Right ventricle myocardium superior (tissue), 1 donor: ENCODE measurements at regions of chr18 and their contacts with region 1.

Region 1: GRCh38 chr18:22169007-22169864 is at the start of gene GATA6:
- DNase-seq: peak; percentile 95
- ATAC-seq: peak; percentile 74
- total RNA-seq, gene GATA6: 56.0 TPM

Region 2: GRCh38 chr18:21914739-21915319 is 254.4 kb before region 1 on chr18:
- intact Hi-C with region 1: loop called (anchors 10 kb)
- DNase-seq: no peak
- ATAC-seq: peak; percentile 73

Region 3: DNA sequence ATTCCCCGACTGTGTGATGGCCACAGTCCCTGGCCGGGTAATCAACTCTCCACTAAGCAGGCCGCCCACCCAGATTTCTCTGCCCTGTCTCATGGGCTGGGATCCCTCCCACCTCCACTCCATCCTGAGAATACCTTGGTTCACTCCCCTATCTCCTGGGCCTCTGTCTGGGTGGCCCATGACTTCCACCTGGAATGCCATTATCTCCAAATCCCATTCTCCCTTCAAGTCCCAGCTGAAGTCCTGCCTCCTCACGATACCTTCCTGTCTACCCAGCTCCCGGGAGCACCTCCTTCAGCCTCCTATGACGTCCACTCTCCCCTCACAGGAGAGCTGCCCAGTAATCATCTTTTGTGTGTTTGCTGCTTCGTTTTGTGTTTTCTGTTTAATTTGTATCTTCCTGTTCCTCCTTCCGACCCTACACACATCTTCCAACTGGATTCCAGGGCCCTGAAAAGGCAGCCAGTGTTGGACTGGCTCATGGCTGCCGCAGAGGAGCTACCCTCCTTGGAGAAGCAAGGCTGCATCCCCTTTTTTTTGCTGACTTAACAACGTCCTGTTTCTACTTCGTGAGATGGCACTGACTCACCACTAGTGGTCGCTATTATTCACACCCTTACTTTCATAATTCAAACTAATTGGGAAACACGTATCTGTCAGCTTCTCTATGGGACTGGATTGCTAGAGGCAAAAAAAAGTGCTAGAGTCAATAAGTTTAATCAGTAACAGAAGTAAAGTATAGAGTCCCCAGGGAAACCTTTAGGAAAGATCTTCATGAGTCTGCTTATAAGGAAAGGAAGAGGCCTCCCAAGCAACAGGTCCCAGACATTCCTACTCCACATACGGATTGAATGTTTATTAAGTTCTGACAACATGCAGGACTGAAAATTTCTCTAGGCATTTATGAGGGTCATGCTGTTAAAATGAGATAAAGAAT is 171.8 kb before region 1 on chr18:
- intact Hi-C with region 1: loop called (anchors 5 kb)
- DNase-seq: no peak
- ATAC-seq: peak; percentile 86

Region 4: DNA sequence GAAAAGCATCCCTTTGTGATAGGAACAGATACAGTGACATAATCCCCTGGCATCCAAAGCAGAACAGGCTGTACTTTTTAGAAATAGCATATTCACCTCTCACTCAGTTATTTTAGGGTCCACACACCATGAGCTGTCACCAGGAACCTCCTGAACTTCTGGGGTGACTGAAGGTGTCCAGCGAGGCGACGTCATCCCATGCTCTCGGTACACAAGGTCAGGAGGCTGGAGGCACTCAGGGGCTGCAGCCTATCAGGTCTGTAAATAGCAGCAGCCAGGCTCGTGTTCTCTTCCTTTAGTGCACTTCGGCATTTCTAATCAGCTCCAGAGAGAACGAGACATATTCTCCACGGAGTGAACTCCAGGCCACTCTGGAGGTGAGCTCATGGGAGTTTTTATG is 98.5 kb after region 1 on chr18:
- intact Hi-C with region 1: loop called (anchors 5 kb)
- DNase-seq: peak; percentile 85
- ATAC-seq: peak; percentile 88

Region 5: DNA sequence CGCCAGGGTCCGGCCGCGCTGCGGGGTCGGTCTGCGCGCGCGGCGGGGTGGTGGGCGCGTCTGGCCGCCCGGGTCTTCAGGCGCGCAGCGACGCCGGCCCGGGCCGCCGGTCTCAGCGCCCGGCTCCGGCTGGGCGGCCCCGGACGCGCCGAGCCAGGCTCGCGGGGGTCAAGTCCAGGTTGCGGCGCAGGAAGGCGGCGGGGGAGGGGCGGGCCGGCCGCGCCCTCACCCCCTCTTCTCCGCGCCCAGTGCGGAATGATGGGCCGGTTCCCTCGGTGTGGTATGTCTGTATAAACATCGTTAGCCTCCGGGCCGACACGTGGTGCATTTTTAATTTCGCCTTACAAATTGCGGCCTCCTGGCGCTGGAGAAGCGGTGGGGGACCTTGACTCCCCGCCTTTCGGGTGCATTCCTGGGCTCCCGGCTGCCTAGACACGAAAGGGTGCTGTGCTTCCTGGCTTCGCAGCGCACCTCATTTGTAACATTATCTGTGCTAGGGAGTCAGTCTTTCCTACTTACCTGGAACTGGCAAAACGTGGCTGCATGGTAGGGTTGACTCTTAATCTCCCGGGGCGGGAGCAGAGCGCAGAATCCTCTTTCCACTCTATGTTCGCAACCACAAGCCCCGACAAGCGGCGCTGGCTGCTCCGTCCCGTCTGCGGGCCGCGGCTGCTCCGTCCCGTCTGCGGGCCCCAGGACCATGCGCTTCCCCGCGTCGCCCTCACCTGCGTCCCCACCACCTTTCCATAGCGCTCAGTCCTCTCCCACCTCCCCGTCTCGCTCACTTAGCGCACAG is 179.5 kb after region 1 on chr18:
- intact Hi-C with region 1: loop called (anchors 5 kb)
- DNase-seq: peak; percentile 88
- ATAC-seq: peak; percentile 81

Region 6: GRCh38 chr18:22563098-22563707 is 394.0 kb after region 1 on chr18:
- intact Hi-C with region 1: loop called (anchors 2 kb)
- DNase-seq: no peak
- ATAC-seq: peak; percentile 66